ENCODE measurements at regions of chr7 and their contacts with region 1.

Region 1: DNA sequence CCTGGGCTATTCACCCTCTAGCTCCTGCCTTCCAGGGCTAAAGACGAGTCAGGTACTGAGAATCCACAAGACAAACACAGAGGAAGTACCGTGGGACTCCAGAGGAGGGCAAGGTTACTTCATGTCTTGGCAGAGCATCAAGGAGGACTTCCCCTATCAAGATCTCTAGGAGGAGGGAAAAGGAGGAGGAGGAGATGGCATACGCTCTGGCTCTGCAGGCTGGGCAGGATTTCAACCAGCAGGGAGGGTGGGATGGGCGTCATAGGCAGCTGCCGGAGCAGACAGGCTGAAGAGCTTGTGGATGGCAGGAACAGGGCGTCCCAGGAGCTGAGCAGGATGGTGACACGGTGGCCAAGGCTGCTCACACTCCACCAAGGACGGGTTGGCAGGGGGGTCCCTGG is 21.3 kb downstream of the MDH2 start:
- DNase-seq: peak; percentile 97
- H3K4me3 Mint-ChIP-seq: no peak overlapping the region
- H3K27ac Mint-ChIP-seq: no peak overlapping the region
- H3K4me1 Mint-ChIP-seq: peaks cover 6% of the 10 kb centered on the region
- H3K27me3 Mint-ChIP-seq: no peaks in the 10 kb centered on the region
- CTCF ChIP-seq: peak; percentile 43

Region 2: DNA sequence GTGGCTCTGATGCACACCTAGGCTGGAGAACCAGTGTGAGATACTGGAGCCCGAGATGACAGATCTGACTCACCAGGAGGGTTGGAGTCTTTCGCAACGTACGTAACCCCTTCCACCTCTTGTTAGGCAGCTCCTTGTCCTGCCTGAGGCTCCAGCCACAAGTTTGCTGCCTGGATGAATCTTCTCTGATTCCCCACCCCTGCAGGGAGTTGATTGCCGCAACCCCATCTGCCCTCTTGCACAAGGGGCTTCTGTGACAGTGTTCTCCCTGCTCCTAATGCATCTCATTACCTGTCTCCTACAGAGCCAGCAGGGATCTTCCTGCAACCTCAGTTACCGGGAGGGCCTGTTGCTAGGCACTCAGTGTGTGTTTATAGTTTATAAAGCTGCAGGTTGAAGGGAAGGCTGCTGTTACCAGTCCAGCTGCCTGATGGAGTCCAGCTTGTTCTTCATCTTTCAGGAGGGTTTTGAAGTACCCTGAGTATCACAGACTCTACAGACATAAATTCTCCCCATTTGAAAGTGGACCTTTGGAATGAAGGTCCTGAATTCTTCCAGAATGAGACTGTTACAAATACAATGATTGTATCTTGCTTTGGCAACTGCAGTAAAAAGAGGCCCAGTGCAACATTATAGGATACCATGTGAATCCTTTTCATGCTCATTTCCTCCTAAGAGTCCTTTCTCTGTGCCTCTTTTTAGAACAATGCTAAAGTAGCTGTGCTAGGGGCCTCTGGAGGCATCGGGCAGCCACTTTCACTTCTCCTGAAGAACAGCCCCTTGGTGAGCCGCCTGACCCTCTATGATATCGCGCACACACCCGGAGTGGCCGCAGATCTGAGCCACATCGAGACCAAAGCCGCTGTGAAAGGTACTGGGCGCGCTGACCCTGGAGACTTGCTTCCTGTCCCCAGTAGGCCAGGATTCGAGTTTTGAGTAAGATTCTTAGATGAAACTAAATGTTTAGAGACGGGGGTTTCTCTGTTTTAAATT is 14.8 kb before region 1 on chr7:
- CTCF ChIA-PET with region 1: interaction called, 10 read pairs
- POLR2A ChIA-PET with region 1: interaction called, 16 read pairs
- intact Hi-C with region 1: no loop called
- DNase-seq: peak; percentile 96
- H3K4me3 Mint-ChIP-seq: no peak overlapping the region
- H3K27ac Mint-ChIP-seq: peak overlapping the region; percentile 35
- H3K4me1 Mint-ChIP-seq: peaks cover 26% of the 10 kb centered on the region
- H3K27me3 Mint-ChIP-seq: no peaks in the 10 kb centered on the region
- CTCF ChIP-seq: no peak

Region 3: DNA sequence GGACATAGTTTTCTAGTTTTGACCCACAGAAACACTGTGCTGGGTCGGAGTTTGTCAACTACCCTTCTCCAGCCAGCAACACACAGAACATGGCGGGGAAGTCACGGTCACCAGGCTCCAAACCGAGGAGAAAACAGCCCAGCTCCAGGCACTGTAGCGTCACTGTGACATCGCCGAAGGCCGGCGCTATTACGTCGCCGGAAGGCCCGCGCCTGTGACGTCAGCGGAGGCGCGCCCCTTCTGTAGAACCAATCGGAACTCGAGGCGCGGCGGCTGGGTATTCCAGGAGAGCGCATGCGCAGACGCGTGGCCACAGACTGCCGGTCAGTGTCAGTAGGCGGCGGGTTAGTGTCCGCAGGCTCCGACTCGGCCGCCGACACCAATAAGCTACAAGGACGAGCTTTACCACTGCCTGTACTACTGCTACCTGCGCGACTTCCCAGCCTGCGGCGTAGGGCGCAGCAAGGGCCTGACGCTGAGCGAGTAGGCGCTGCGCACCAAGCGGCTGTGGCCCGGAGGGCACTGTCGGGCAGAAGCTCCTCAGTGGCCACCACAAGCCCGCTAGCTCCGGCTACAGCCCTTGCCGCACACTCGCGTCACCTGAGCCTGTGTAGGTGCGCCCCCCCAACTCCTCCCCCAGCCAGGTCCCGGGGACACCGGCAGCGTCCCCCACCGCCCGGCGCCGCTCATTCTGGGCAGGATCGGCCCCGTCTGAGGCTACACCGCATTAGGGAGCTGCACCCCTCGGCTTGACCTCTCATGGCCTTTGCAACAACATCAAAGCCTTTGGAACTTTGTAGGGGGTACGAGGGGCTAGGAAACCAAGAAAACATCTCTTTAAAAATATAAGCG is 97.4 kb after region 1 on chr7:
- CTCF ChIA-PET with region 1: interaction called, 3 read pairs
- POLR2A ChIA-PET with region 1: interaction called, 3 read pairs
- intact Hi-C with region 1: loop called (anchors 1 kb)
- DNase-seq: peak; percentile 95
- H3K4me3 Mint-ChIP-seq: peak overlapping the region; percentile 74
- H3K27ac Mint-ChIP-seq: peak overlapping the region; percentile 94
- H3K4me1 Mint-ChIP-seq: no peaks in the 10 kb centered on the region
- H3K27me3 Mint-ChIP-seq: no peaks in the 10 kb centered on the region
- CTCF ChIP-seq: no peak